MCF 10A (cell line): ENCODE measurements at regions of chr12 and their contacts with region 1.

Region 1: GRCh38 chr12:110468212-110469048 is at the starts of genes FAM216A and GPN3:
- DNase-seq: peak; percentile 99
- H3K4me3 Mint-ChIP-seq: peak within 1 kb of the TSS; percentile 88
- H3K27ac Mint-ChIP-seq: peak within 1 kb of the TSS; percentile 93
- H3K4me1 Mint-ChIP-seq: peaks cover 11% of the 10 kb centered on the region
- H3K27me3 Mint-ChIP-seq: no peaks in the 10 kb centered on the region
- CTCF ChIP-seq: no peak
- total RNA-seq, gene FAM216A: 19.9 and 25.8 TPM in 2 replicates
- total RNA-seq, gene GPN3: 16.1 and 18.1 TPM in 2 replicates

Region 2: GRCh38 chr12:110449799-110450497 is 18.5 kb before region 1 on chr12 and contains the start of gene ARPC3:
- CTCF ChIA-PET with region 1: interaction called, 38 read pairs
- POLR2A ChIA-PET with region 1: interaction called, 126 read pairs
- intact Hi-C with region 1: loop called (anchors 1 kb)
- DNase-seq: peak; percentile 93
- H3K4me3 Mint-ChIP-seq: peak within 1 kb of the TSS; percentile 99
- H3K27ac Mint-ChIP-seq: peak within 1 kb of the TSS; percentile 100
- H3K4me1 Mint-ChIP-seq: peaks cover 5% of the 10 kb centered on the region
- H3K27me3 Mint-ChIP-seq: no peaks in the 10 kb centered on the region
- CTCF ChIP-seq: peak; percentile 83
- total RNA-seq, gene ARPC3: 230 and 245 TPM in 2 replicates

Region 3: DNA sequence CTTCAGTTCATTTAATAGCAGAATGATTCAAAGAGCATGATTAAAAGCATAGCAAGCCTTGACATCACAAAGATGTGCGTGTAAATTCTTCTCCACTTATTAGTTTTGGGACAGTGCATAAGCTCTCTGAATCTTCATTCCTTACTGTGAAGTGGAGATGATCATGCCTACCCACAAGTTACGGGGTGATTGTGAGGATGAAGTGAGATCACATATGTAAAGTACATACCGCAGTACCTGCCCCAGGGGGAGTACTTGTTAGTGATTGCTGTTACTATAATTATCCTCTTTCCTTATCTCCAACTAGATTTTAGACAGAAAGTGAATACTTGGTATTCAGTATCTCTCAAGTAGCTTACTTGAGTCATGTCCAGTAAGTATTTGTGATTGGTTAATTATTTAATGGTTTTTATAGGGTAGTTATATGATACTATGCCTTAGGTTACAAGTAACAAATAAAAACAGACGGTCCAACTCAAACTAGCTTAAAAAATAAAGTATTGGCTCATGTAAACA is 39.7 kb after region 1 on chr12:
- CTCF ChIA-PET with region 1: interaction called, 7 read pairs
- POLR2A ChIA-PET with region 1: interaction called, 11 read pairs
- intact Hi-C with region 1: no loop called
- DNase-seq: no peak
- H3K4me3 Mint-ChIP-seq: no peak overlapping the region
- H3K27ac Mint-ChIP-seq: no peak overlapping the region
- H3K4me1 Mint-ChIP-seq: no peaks in the 10 kb centered on the region
- H3K27me3 Mint-ChIP-seq: no peaks in the 10 kb centered on the region
- CTCF ChIP-seq: no peak

Region 4: GRCh38 chr12:110537605-110538409 is 69.4 kb after region 1 on chr12:
- CTCF ChIA-PET with region 1: interaction called, 3 read pairs
- POLR2A ChIA-PET with region 1: interaction called, 14 read pairs
- intact Hi-C with region 1: no loop called
- DNase-seq: peak; percentile 97
- H3K4me3 Mint-ChIP-seq: peak overlapping the region; percentile 47
- H3K27ac Mint-ChIP-seq: peak overlapping the region; percentile 69
- H3K4me1 Mint-ChIP-seq: peaks cover 40% of the 10 kb centered on the region
- H3K27me3 Mint-ChIP-seq: no peaks in the 10 kb centered on the region
- CTCF ChIP-seq: no peak

Region 5: GRCh38 chr12:110577717-110578521 is 109.5 kb after region 1 on chr12:
- CTCF ChIA-PET with region 1: interaction called, 3 read pairs
- POLR2A ChIA-PET with region 1: interaction called, 10 read pairs
- intact Hi-C with region 1: no loop called
- DNase-seq: peak; percentile 93
- H3K4me3 Mint-ChIP-seq: peak overlapping the region; percentile 96
- H3K27ac Mint-ChIP-seq: peak overlapping the region; percentile 97
- H3K4me1 Mint-ChIP-seq: peaks cover 26% of the 10 kb centered on the region
- H3K27me3 Mint-ChIP-seq: no peaks in the 10 kb centered on the region
- CTCF ChIP-seq: no peak

Region 6: GRCh38 chr12:110613771-110614684 is 145.6 kb after region 1 on chr12 and contains the start of gene TCTN1:
- CTCF ChIA-PET with region 1: interaction called, 6 read pairs
- POLR2A ChIA-PET with region 1: interaction called, 17 read pairs
- intact Hi-C with region 1: no loop called
- DNase-seq: peak; percentile 92
- H3K4me3 Mint-ChIP-seq: peak within 1 kb of the TSS; percentile 78
- H3K27ac Mint-ChIP-seq: peak within 1 kb of the TSS; percentile 66
- H3K4me1 Mint-ChIP-seq: no peaks in the 10 kb centered on the region
- H3K27me3 Mint-ChIP-seq: no peaks in the 10 kb centered on the region
- CTCF ChIP-seq: no peak
- total RNA-seq, gene TCTN1: 36.5 and 38.9 TPM in 2 replicates

Region 7: GRCh38 chr12:110846615-110847566 is 378.5 kb after region 1 on chr12 and contains the start of gene CCDC63:
- CTCF ChIA-PET with region 1: no interaction called
- POLR2A ChIA-PET with region 1: no interaction called
- intact Hi-C with region 1: no loop called
- DNase-seq: no peak
- H3K4me3 Mint-ChIP-seq: no peak within 1 kb of the TSS
- H3K27ac Mint-ChIP-seq: no peak within 1 kb of the TSS
- H3K4me1 Mint-ChIP-seq: peaks cover 13% of the 10 kb centered on the region
- H3K27me3 Mint-ChIP-seq: peaks cover 28% of the 10 kb centered on the region
- CTCF ChIP-seq: no peak
- total RNA-seq, gene CCDC63: not detected in 2 replicates